ENCODE measurements at regions of chr5 and their contacts with region 1.

Region 1: GRCh38 chr5:23820765-23821471 is 313.5 kb downstream of the PRDM9 start:
- DNase-seq: no peak
- H3K4me3 ChIP-seq: no peak overlapping the region
- H3K27ac ChIP-seq: no peak overlapping the region
- H3K4me1 ChIP-seq: no peaks in the 10 kb centered on the region
- H3K27me3 ChIP-seq: no peaks in the 10 kb centered on the region
- CTCF ChIP-seq: peak in 2 of 3 experiments; percentile 52 to 58; a peak in 2 of 4 replicates
- EP300 ChIP-seq: no peak
- POLR2A ChIP-seq: no peak
- RAD21 ChIP-seq: peak; percentile 75

Region 2: DNA sequence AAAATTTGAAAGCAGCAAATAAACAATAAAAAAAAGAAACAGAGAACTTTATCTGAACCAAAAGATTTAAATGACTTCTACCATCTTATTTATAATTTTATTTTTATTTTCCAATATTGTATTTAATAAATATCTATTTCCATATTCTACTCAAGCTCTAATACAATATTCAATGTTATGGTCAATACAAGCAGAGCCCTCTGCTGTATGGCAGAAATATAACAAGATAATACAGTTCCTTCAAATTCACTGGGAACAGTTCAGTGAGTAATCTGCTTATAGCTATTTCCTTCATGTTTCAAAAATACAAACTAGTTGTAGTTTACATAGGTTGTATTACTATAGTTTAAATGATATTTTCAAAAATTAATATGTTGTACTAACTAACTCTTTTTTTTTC is 19.2 kb after region 1 on chr5:
- CTCF ChIA-PET with region 1: interaction called, 12 read pairs
- POLR2A ChIA-PET with region 1: no interaction called
- DNase-seq: no peak
- H3K4me3 ChIP-seq: no peak overlapping the region
- H3K27ac ChIP-seq: no peak overlapping the region
- H3K4me1 ChIP-seq: no peaks in the 10 kb centered on the region
- H3K27me3 ChIP-seq: no peaks in the 10 kb centered on the region
- CTCF ChIP-seq: no peak
- EP300 ChIP-seq: no peak
- POLR2A ChIP-seq: no peak
- RAD21 ChIP-seq: no peak

Measured in H1 (cell line).